ENCODE measurements at regions of chr9 and their contacts with region 1.

Region 1: DNA sequence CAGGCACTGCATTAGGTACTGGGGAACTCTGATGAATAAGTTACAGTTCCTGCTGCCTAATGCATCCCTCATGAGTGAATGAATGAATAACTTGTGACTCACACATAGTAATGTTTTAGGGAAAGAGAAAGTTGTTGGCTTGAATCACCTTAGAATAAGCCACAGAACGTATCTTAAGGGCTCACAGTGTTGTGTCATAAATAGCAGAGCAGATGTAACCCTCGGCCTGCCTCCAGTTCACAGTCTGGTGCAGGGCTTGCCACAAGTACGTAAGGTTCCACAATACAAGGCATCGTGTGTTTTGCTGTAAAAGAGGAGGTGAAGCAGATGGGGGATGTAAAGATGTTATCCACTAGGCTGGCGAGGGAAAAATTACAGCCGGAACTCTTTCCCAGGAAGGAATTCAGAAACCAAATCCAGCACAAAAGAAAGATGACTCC is 218.7 kb downstream of the TRPM3 start:
- DNase-seq: peak in 1 of 2 donors; percentile 51
- ATAC-seq: peak; percentile 36
- H3K4me3 ChIP-seq: peak overlapping the region; percentile 0 to 26
- H3K27ac ChIP-seq: no peak overlapping the region
- H3K4me1 ChIP-seq: peaks cover 0 to 4% of the 10 kb centered on the region in 2 donors
- H3K27me3 ChIP-seq: no peaks in the 10 kb centered on the region

Region 2: GRCh38 chr9:70868661-70869652 is 33.8 kb before region 1 on chr9:
- intact Hi-C with region 1: loop called in 1 of 2 experiments (anchors 5 kb)
- DNase-seq: no peak
- ATAC-seq: peak; percentile 77
- H3K4me3 ChIP-seq: peak overlapping the region; percentile 92 to 99
- H3K27ac ChIP-seq: peak overlapping the region; percentile 71 to 82
- H3K4me1 ChIP-seq: no peaks in the 10 kb centered on the region
- H3K27me3 ChIP-seq: no peaks in the 10 kb centered on the region